Mammary epithelial cell (primary cell): ENCODE measurements at regions of chr5 and their contacts with region 1.

Region 1: DNA sequence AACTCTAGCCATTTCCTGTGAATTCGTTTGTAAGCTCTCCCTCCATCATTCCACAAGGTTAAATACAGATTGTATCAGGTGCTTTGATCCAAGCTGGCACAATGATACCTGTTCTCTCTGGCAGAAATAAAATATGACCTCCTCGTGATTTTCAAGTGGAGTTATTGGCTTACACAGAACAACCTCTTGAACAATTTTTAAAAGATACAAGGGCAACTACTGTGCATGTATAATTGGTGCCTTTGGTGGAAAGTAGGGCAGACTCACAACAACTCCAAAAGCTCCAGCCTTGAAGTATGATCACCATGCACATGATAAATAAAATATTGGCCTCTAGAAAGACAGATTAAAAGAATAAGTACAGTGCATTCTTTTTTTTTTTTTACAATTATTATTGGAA is 106.0 kb downstream of the SEMA6A start:
- DNase-seq: no peak
- H3K4me3 ChIP-seq: no peak overlapping the region
- H3K27ac ChIP-seq: no peak overlapping the region
- H3K4me1 ChIP-seq: no peaks in the 10 kb centered on the region
- H3K27me3 ChIP-seq: no peaks in the 10 kb centered on the region
- CTCF ChIP-seq: no peak

Region 2: GRCh38 chr5:116378007-116378776 is 90.4 kb before region 1 on chr5:
- CTCF ChIA-PET with region 1: no interaction called
- dilution Hi-C with region 1: no loop called
- in situ Hi-C with region 1: no loop called
- intact Hi-C with region 1: no loop called
- DNase-seq: no peak
- H3K4me3 ChIP-seq: no peak overlapping the region
- H3K27ac ChIP-seq: no peak overlapping the region
- H3K4me1 ChIP-seq: no peaks in the 10 kb centered on the region
- H3K27me3 ChIP-seq: no peaks in the 10 kb centered on the region
- CTCF ChIP-seq: no peak

Region 3: GRCh38 chr5:116502651-116503095 is 34.1 kb after region 1 on chr5:
- CTCF ChIA-PET with region 1: interaction called, 24 read pairs
- dilution Hi-C with region 1: no loop called
- in situ Hi-C with region 1: no loop called
- intact Hi-C with region 1: no loop called
- DNase-seq: no peak
- H3K4me3 ChIP-seq: no peak overlapping the region
- H3K27ac ChIP-seq: no peak overlapping the region
- H3K4me1 ChIP-seq: no peaks in the 10 kb centered on the region
- H3K27me3 ChIP-seq: no peaks in the 10 kb centered on the region
- CTCF ChIP-seq: no peak

Region 4: DNA sequence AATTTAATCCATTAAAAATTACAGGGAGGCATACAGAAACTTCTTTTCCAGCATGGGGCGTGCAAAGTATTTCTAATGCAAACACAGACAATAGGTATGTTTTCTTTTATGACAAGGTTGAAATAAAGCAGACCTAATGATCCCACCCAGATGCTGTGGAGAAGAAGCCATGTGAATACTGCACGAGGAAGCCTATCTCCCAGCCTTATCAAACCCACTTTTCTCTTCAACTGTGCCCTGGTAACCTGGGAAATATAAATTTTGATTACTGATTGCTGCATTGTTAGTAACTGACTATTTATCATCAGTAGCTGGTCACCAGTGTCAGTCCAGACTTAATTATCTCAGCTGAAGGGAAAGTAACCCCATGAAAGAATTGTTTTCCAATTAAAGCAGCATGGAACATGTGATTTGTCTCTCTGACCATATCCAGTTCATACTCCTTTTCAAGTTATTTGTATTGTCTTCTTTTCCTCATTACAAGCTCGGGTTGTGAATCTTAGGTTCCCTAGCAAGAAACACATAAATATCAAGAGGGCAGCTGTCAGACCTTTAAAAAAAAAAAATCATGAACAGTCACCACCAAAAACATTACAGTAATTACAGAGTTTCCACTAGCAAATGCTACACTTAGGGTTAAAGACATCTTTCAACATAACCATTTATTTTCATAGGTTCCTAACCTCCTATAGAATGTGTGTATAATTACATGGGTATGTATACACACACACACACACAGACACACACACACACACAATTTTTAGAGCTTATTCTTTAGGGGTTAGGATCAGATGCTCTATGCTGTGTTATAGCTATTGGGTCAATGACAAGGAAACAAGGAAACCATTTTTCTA is 55.7 kb after region 1 on chr5:
- CTCF ChIA-PET with region 1: no interaction called
- dilution Hi-C with region 1: no loop called
- in situ Hi-C with region 1: no loop called
- intact Hi-C with region 1: no loop called
- DNase-seq: no peak
- H3K4me3 ChIP-seq: no peak overlapping the region
- H3K27ac ChIP-seq: no peak overlapping the region
- H3K4me1 ChIP-seq: peaks cover 7% of the 10 kb centered on the region
- H3K27me3 ChIP-seq: no peaks in the 10 kb centered on the region
- CTCF ChIP-seq: no peak

Region 5: GRCh38 chr5:116922532-116922931 is 453.9 kb after region 1 on chr5:
- CTCF ChIA-PET with region 1: no interaction called
- dilution Hi-C with region 1: no loop called
- in situ Hi-C with region 1: no loop called
- intact Hi-C with region 1: no loop called
- DNase-seq: no peak
- H3K4me3 ChIP-seq: no peak overlapping the region
- H3K27ac ChIP-seq: no peak overlapping the region
- H3K4me1 ChIP-seq: no peaks in the 10 kb centered on the region
- H3K27me3 ChIP-seq: no peaks in the 10 kb centered on the region
- CTCF ChIP-seq: no peak